GM10248 (cell line): ENCODE measurements at regions of chr11 and their contacts with region 1.

Region 1: GRCh38 chr11:110366291-110366690 is 63.5 kb upstream of the FDX1 start:
- DNase-seq: no peak
- CTCF ChIP-seq: no peak

Region 2: DNA sequence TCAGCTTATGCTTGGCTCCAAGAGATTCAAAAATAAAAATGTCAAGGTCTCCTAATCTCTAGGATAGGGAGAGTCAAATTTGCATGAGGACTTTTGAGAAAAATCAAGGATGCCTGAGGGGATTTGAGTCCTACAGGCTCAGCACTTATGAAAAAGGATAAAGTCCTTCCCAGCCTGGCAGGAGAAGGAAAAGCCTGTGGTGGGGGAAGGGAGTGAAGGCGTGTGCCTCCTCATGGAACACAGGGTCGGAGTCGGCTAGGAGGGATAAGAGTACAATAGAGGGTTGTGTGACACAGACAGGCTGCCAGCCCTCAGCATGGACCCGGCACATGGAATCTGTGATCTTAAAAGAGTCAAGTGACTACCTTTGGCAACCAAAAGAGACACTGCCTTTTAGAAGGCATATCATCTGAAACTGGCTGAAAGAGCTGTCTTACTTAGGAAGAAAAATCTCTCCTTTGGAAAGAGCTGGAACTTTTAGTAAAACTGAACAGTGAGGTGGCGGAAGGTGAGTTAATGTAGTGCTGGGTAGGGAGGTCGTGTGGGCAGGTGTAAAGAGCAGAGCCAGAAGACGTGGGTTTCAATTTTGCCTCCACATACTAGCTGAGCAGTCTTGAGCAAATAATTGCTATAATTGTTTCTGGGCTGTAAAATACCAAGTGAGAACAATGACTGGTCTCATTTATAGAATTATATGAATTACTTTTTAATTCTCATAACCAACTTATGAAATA is 11.1 kb before region 1 on chr11:
- CTCF ChIA-PET with region 1: interaction called, 14 read pairs
- POLR2A ChIA-PET with region 1: no interaction called
- DNase-seq: no peak
- CTCF ChIP-seq: no peak